CD8-positive, alpha-beta T cell (primary cell): ENCODE measurements at regions of chr1 and their contacts with region 1.

Region 1: GRCh38 chr1:9588551-9589143 is at the start of gene TMEM201:
- DNase-seq: peak; percentile 87 to 97 (median 95)
- ATAC-seq: peak; percentile 94
- H3K4me3 ChIP-seq: peak within 1 kb of the TSS; percentile 53 to 59
- H3K4me3 Mint-ChIP-seq: peak within 1 kb of the TSS; percentile 88
- H3K27ac ChIP-seq: peak within 1 kb of the TSS; percentile 21 to 32
- H3K27ac Mint-ChIP-seq: peak within 1 kb of the TSS; percentile 74
- H3K4me1 ChIP-seq: peaks cover 22% of the 10 kb centered on the region
- H3K4me1 Mint-ChIP-seq: peaks cover 24% of the 10 kb centered on the region
- H3K27me3 ChIP-seq: no peaks in the 10 kb centered on the region
- H3K27me3 Mint-ChIP-seq: no peaks in the 10 kb centered on the region
- CTCF ChIP-seq: peak; percentile 77
- total RNA-seq, gene TMEM201: 10.7 to 11.5 TPM

Region 2: GRCh38 chr1:9234223-9235095 is 354.2 kb before region 1 on chr1 and contains the start of gene H6PD:
- CTCF ChIA-PET with region 1: no interaction called
- POLR2A ChIA-PET with region 1: no interaction called
- intact Hi-C with region 1: loop called in 1 of 2 experiments (anchors 1 kb)
- DNase-seq: peak; percentile 43 to 89 (median 71)
- ATAC-seq: peak; percentile 76
- H3K4me3 ChIP-seq: peak within 1 kb of the TSS; percentile 71 to 84
- H3K4me3 Mint-ChIP-seq: peak within 1 kb of the TSS; percentile 96
- H3K27ac ChIP-seq: peak within 1 kb of the TSS; percentile 64 to 84
- H3K27ac Mint-ChIP-seq: peak within 1 kb of the TSS; percentile 96
- H3K4me1 ChIP-seq: peaks cover 26% of the 10 kb centered on the region
- H3K4me1 Mint-ChIP-seq: peaks cover 38% of the 10 kb centered on the region
- H3K27me3 ChIP-seq: no peaks in the 10 kb centered on the region
- H3K27me3 Mint-ChIP-seq: no peaks in the 10 kb centered on the region
- CTCF ChIP-seq: peak; percentile 22
- total RNA-seq, gene H6PD: 11.1 to 11.2 TPM

Region 3: GRCh38 chr1:9371391-9371935 is 217.2 kb before region 1 on chr1:
- CTCF ChIA-PET with region 1: no interaction called
- POLR2A ChIA-PET with region 1: no interaction called
- intact Hi-C with region 1: no loop called
- DNase-seq: no peak
- ATAC-seq: no peak
- H3K4me3 ChIP-seq: no peak overlapping the region
- H3K4me3 Mint-ChIP-seq: no peak overlapping the region
- H3K27ac ChIP-seq: no peak overlapping the region
- H3K27ac Mint-ChIP-seq: no peak overlapping the region
- H3K4me1 ChIP-seq: peaks cover 11% of the 10 kb centered on the region
- H3K4me1 Mint-ChIP-seq: peaks cover 5% of the 10 kb centered on the region
- H3K27me3 ChIP-seq: no peaks in the 10 kb centered on the region
- H3K27me3 Mint-ChIP-seq: no peaks in the 10 kb centered on the region
- CTCF ChIP-seq: no peak

Region 4: DNA sequence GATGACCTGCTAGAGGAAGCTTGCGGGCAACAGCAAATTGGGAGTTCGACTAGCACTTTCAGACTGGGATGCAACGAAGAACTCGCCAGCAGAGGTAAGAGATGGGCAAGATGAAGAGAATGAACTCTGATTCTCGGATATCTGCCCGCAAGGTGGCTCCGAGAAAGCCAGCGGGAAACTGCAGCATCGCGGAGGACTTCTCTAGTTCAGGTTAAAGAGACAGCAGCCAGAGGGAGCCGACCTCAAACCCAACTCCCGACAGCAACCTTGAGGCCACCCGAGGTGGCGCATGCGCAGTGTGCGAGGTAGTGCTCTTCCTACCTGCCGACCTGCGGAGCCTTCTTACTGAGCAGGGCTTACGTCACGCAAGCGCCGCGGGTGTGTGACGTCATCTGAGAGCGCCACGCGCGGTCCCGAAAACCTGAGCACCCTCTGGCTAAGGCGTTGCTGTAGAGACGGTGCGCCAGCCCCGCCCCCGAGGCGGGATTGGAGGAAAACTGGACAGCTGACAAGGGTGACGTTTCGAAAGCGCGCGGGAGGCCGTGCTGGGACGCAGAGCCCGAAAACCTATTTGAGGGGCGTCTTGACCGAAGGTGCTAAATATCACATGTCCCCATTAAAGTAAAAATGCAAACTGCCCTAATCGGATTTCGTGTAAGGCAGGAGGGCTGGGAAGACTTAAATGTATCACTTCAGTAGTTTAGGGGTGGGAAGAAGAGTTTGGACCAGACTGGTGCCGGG is 159.9 kb before region 1 on chr1:
- CTCF ChIA-PET with region 1: no interaction called
- POLR2A ChIA-PET with region 1: no interaction called
- intact Hi-C with region 1: loop called (anchors 1 kb)
- DNase-seq: peak; percentile 99 to 100 (median 100)
- ATAC-seq: peak; percentile 79
- H3K4me3 ChIP-seq: peak overlapping the region; percentile 51 to 54
- H3K4me3 Mint-ChIP-seq: peak overlapping the region; percentile 97
- H3K27ac ChIP-seq: peak overlapping the region; percentile 64 to 69
- H3K27ac Mint-ChIP-seq: peak overlapping the region; percentile 99
- H3K4me1 ChIP-seq: peaks cover 44% of the 10 kb centered on the region
- H3K4me1 Mint-ChIP-seq: peaks cover 51% of the 10 kb centered on the region
- H3K27me3 ChIP-seq: peaks cover 0 to 4% of the 10 kb centered on the region in 2 experiments
- H3K27me3 Mint-ChIP-seq: no peaks in the 10 kb centered on the region
- CTCF ChIP-seq: no peak

Region 5: DNA sequence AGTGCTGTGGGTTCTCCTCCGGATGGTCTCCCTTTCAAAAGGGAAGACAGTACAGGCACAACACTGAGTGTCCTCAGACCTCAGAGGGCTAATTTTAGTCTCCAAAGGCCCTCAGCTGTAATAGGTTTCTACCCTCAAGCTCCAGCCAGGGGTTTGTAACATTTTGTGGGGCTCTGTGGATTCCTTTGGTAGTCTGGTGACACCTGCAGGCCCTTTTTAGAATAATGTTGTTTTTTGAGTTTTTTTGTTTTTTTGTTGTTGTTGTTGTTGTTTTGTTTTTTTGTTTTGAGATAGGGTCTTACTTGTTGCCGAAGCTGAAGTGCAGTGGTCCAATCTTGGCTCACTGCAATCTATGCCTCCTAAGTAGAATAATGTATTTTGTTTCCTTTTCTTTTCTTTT is 14.9 kb before region 1 on chr1:
- CTCF ChIA-PET with region 1: interaction called, 11 read pairs
- POLR2A ChIA-PET with region 1: no interaction called
- intact Hi-C with region 1: no loop called
- DNase-seq: peak in 2 of 9 experiments; percentile 26 to 48
- ATAC-seq: no peak
- H3K4me3 ChIP-seq: no peak overlapping the region
- H3K4me3 Mint-ChIP-seq: no peak overlapping the region
- H3K27ac ChIP-seq: no peak overlapping the region
- H3K27ac Mint-ChIP-seq: no peak overlapping the region
- H3K4me1 ChIP-seq: no peaks in the 10 kb centered on the region
- H3K4me1 Mint-ChIP-seq: no peaks in the 10 kb centered on the region
- H3K27me3 ChIP-seq: no peaks in the 10 kb centered on the region
- H3K27me3 Mint-ChIP-seq: no peaks in the 10 kb centered on the region
- CTCF ChIP-seq: no peak

Region 6: GRCh38 chr1:9689011-9689706 is 100.5 kb after region 1 on chr1:
- CTCF ChIA-PET with region 1: no interaction called
- POLR2A ChIA-PET with region 1: no interaction called
- intact Hi-C with region 1: loop called in 1 of 2 experiments (anchors 1 kb)
- DNase-seq: peak; percentile 67 to 91 (median 84)
- ATAC-seq: peak; percentile 77
- H3K4me3 ChIP-seq: peak overlapping the region; percentile 55 to 72
- H3K4me3 Mint-ChIP-seq: peak overlapping the region; percentile 81
- H3K27ac ChIP-seq: peak overlapping the region; percentile 33 to 78
- H3K27ac Mint-ChIP-seq: peak overlapping the region; percentile 82
- H3K4me1 ChIP-seq: peaks cover 77% of the 10 kb centered on the region
- H3K4me1 Mint-ChIP-seq: peaks cover 69% of the 10 kb centered on the region
- H3K27me3 ChIP-seq: no peaks in the 10 kb centered on the region
- H3K27me3 Mint-ChIP-seq: no peaks in the 10 kb centered on the region
- CTCF ChIP-seq: no peak